ENCODE measurements at regions of chr19 and their contacts with region 1.

Region 1: DNA sequence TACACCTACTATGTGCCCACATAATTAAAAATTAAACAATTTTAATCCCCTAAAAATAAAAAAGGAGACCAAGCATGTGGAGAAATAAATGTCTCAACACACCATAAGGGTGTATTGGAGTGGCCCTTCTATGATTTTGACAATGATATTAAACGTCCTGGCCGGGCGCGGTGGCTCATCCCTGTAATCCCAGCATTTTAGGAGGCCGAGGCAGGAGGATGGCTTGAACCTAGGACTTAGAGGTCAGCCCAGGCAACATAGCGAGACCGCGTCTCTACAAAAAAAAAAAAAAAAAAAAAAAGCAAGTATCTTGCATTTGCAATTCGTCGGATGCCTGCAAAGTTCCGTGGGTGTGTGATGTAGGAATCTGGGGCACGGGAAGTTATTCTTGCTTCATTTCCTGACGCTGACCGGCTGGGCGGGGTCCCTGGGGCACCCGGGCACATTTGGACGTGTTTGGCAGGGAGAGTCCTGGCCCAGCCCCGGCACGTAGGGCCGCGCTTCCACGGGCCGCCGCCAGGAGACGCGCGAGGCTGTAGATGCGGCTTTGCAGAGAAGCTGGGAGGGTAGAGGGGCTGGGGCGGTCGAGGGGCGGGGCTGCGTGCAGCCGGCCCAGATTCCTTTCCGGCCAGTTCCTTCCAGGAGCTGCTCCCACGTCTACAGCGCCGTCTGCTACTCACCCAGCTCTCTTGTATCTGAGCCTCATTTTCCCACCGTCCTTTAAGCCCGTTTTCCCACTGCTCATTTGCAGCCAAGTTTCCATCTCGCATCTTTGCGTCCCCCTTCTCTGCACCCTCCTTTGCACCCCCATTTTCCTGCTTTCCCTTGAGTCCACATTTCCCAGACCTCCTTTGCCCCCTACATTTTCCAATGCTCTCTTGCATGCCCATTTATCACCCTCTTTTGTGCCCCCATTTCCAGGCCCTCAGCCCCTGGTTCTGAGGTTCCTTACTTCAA is 2.2 kb upstream of the TSPAN16 start:
- DNase-seq: peak; percentile 93 to 99
- H3K4me3 ChIP-seq: peak overlapping the region; percentile 37; the same call in 1 of the 2 replicates
- H3K27ac ChIP-seq: 0 out of 2 replicates have a peak overlapping the region, but pooled peaks have one; percentile 30
- H3K4me1 ChIP-seq: peaks cover 30% of the 10 kb centered on the region
- H3K27me3 ChIP-seq: no peaks in the 10 kb centered on the region
- CTCF ChIP-seq: peak; percentile 99

Region 2: GRCh38 chr19:11346092-11346940 is 52.6 kb after region 1 on chr19 and contains the starts of genes CCDC159 and TMEM205:
- CTCF ChIA-PET with region 1: interaction called, 3 read pairs
- POLR2A ChIA-PET with region 1: interaction called, 4 read pairs
- intact Hi-C with region 1: loop called (anchors 2 kb)
- DNase-seq: peak; percentile 98 to 99
- H3K4me3 ChIP-seq: peak within 1 kb of the TSS; percentile 90
- H3K27ac ChIP-seq: peak within 1 kb of the TSS; percentile 67
- H3K4me1 ChIP-seq: peaks cover 36% of the 10 kb centered on the region
- H3K27me3 ChIP-seq: no peaks in the 10 kb centered on the region
- CTCF ChIP-seq: no peak
- total RNA-seq, gene CCDC159: 9.4 and 13.7 TPM in 2 replicates
- total RNA-seq, gene TMEM205: 80.3 and 90.6 TPM in 2 replicates

Region 3: GRCh38 chr19:11405846-11406643 is 112.3 kb after region 1 on chr19:
- CTCF ChIA-PET with region 1: no interaction called
- POLR2A ChIA-PET with region 1: no interaction called
- intact Hi-C with region 1: no loop called
- DNase-seq: no peak
- H3K4me3 ChIP-seq: no peak overlapping the region
- H3K27ac ChIP-seq: no peak overlapping the region
- H3K4me1 ChIP-seq: no peaks in the 10 kb centered on the region
- H3K27me3 ChIP-seq: no peaks in the 10 kb centered on the region
- CTCF ChIP-seq: no peak

Region 4: GRCh38 chr19:11435058-11435832 is 141.5 kb after region 1 on chr19 and contains the starts of genes ODAD3 and PRKCSH:
- CTCF ChIA-PET with region 1: interaction called, 3 read pairs
- POLR2A ChIA-PET with region 1: no interaction called
- intact Hi-C with region 1: loop called (anchors 2 kb)
- DNase-seq: peak; percentile 99
- H3K4me3 ChIP-seq: peak within 1 kb of the TSS; percentile 76
- H3K27ac ChIP-seq: peak within 1 kb of the TSS; percentile 67
- H3K4me1 ChIP-seq: peaks cover 14% of the 10 kb centered on the region
- H3K27me3 ChIP-seq: no peaks in the 10 kb centered on the region
- CTCF ChIP-seq: peak; percentile 96
- total RNA-seq, gene ODAD3: 0.15 and 0.39 TPM in 2 replicates
- total RNA-seq, gene PRKCSH: 410 and 412 TPM in 2 replicates

Region 5: GRCh38 chr19:11551603-11552235 is 258.0 kb after region 1 on chr19:
- CTCF ChIA-PET with region 1: interaction called, 24 read pairs
- POLR2A ChIA-PET with region 1: no interaction called
- intact Hi-C with region 1: no loop called
- DNase-seq: no peak
- H3K4me3 ChIP-seq: no peak overlapping the region
- H3K27ac ChIP-seq: no peak overlapping the region
- H3K4me1 ChIP-seq: no peaks in the 10 kb centered on the region
- H3K27me3 ChIP-seq: no peaks in the 10 kb centered on the region
- CTCF ChIP-seq: no peak; the same call in 1 of the 2 replicates

Measured in PC-9 (cell line).